Activated CD4-positive, alpha-beta T cell treated with anti-CD3 and anti-CD28 coated beads, Interleukin-2, amount 10 ng/mL, durations not matched to agents 7 days and 5 days (primary cell): ENCODE measurements at regions of chr9 and their contacts with region 1.

Region 1: GRCh38 chr9:131395157-131396098 is 1.5 kb downstream of the PRRC2B start:
- DNase-seq: peak; percentile 88
- H3K4me3 Mint-ChIP-seq: peak overlapping the region; percentile 92
- H3K27ac Mint-ChIP-seq: peak overlapping the region; percentile 95
- H3K4me1 Mint-ChIP-seq: peaks cover 58% of the 10 kb centered on the region
- H3K27me3 Mint-ChIP-seq: peaks cover 4% of the 10 kb centered on the region

Region 2: GRCh38 chr9:131407717-131408195 is 12.3 kb after region 1 on chr9:
- CTCF ChIA-PET with region 1: interaction called, 12 read pairs
- POLR2A ChIA-PET with region 1: interaction called, 5 read pairs
- DNase-seq: peak; percentile 60
- H3K4me3 Mint-ChIP-seq: peak overlapping the region; percentile 66
- H3K27ac Mint-ChIP-seq: peak overlapping the region; percentile 83
- H3K4me1 Mint-ChIP-seq: peaks cover 91% of the 10 kb centered on the region
- H3K27me3 Mint-ChIP-seq: no peaks in the 10 kb centered on the region